Uterus (tissue), 4 donors: ENCODE measurements at regions of chr9 and their contacts with region 1.

Region 1: DNA sequence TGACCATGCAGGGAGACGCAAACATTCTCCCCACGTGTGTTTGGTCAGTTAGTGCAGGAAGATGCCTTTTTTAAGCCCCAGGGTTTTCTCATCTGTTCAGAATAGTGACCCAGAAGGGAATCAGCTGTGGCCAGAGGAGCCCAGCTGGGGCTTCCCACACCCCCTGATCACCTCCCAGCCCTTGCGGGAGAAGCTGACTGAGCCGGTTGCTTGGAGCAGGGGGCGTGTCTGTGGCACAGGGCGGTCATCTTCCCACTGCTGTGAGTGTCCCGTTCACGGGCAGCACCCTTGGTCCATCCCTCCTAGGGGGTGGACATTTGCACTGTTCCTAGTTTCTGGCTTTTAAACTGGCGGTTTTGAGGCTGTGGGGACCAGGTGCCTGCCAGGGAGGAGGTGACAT is 69.7 kb downstream of the NEK6 start:
- DNase-seq: no peak
- H3K4me3 ChIP-seq: no peak overlapping the region
- H3K27ac ChIP-seq: no peak overlapping the region
- H3K4me1 ChIP-seq: no peaks in the 10 kb centered on the region
- H3K27me3 ChIP-seq: no peaks in the 10 kb centered on the region
- CTCF ChIP-seq: no peak
- POLR2A ChIP-seq: no peak

Region 2: GRCh38 chr9:124363326-124364096 is 36.0 kb after region 1 on chr9:
- intact Hi-C with region 1: loop called (anchors 2 kb)
- DNase-seq: no peak
- H3K4me3 ChIP-seq: no peak overlapping the region
- H3K27ac ChIP-seq: no peak overlapping the region
- H3K4me1 ChIP-seq: no peaks in the 10 kb centered on the region
- H3K27me3 ChIP-seq: no peaks in the 10 kb centered on the region
- CTCF ChIP-seq: no peak
- POLR2A ChIP-seq: no peak

Region 3: GRCh38 chr9:124468061-124468740 is 140.7 kb after region 1 on chr9:
- intact Hi-C with region 1: no loop called
- DNase-seq: no peak
- H3K4me3 ChIP-seq: no peak overlapping the region
- H3K27ac ChIP-seq: no peak overlapping the region
- H3K4me1 ChIP-seq: no peaks in the 10 kb centered on the region
- H3K27me3 ChIP-seq: no peaks in the 10 kb centered on the region
- CTCF ChIP-seq: no peak
- POLR2A ChIP-seq: no peak

Region 4: DNA sequence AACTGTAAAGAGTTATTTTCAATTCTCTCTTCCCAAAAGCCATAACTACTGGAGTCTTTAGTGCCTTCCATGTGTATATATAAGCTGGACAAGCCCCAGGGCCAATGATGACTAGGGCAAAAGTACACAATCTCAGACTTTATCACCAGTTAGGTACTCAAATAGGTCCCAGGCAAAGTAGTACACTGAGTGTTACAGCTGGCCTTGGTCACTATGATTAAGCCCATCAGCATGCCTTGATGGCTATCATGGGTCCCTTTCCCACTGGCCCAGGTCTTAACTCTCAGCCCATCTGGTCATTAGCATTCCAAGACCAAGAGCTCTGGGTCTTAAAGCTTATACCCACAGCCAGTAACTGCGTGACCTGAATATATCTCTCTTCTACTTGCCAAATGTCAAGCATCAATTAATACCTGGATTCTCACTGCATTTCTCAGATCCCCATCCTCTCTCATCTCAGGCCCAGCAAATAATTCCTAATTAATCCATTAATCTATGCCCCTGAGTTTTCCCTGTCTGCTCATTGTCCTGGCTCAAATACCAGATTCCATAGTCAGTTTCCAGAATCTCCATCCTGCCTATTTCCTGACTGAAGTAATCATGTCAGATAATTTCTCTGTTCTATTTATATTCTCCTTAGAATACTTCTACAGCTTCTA is 381.3 kb after region 1 on chr9:
- intact Hi-C with region 1: no loop called
- DNase-seq: no peak
- H3K4me3 ChIP-seq: no peak overlapping the region
- H3K27ac ChIP-seq: no peak overlapping the region
- H3K4me1 ChIP-seq: no peaks in the 10 kb centered on the region
- H3K27me3 ChIP-seq: no peaks in the 10 kb centered on the region
- CTCF ChIP-seq: no peak
- POLR2A ChIP-seq: no peak